ENCODE measurements at regions of chr3 and their contacts with region 1.

Region 1: GRCh38 chr3:129399145-129399894 is 29.1 kb downstream of the EFCAB12 start:
- DNase-seq: peak; percentile 95
- ATAC-seq: peak; percentile 74
- H3K4me3 ChIP-seq: peak overlapping the region; percentile 61 to 86 (median 85)
- H3K27ac ChIP-seq: peak overlapping the region; percentile 87
- H3K4me1 ChIP-seq: peaks cover 75% of the 10 kb centered on the region
- H3K27me3 ChIP-seq: no peaks in the 10 kb centered on the region; a peak in 1 of 5 replicates
- CTCF ChIP-seq: peak; percentile 84
- EP300 ChIP-seq: peak in 1 of 2 experiments; percentile 100; a peak in 1 of 4 replicates
- POLR2A ChIP-seq: no peak
- RAD21 ChIP-seq: peak; percentile 23; the same call in 1 of the 2 replicates

Region 2: GRCh38 chr3:129439817-129440617 is 40.7 kb after region 1 on chr3 and contains the starts of genes IFT122 and MBD4:
- CTCF ChIA-PET with region 1: no interaction called
- POLR2A ChIA-PET with region 1: interaction called, 23 read pairs
- in situ Hi-C with region 1: no loop called
- intact Hi-C with region 1: no loop called
- DNase-seq: peak; percentile 97
- ATAC-seq: peak; percentile 96
- H3K4me3 ChIP-seq: peak within 1 kb of the TSS; percentile 86 to 96 (median 90)
- H3K27ac ChIP-seq: peak within 1 kb of the TSS; percentile 75
- H3K4me1 ChIP-seq: peaks cover 55% of the 10 kb centered on the region
- H3K27me3 ChIP-seq: no peaks in the 10 kb centered on the region; a peak in 1 of 5 replicates
- CTCF ChIP-seq: no peak
- EP300 ChIP-seq: 0 out of 4 replicates have a peak, but pooled peaks of 1 of the 2 experiments have one; percentile 14
- POLR2A ChIP-seq: peak; percentile 64 to 69
- RAD21 ChIP-seq: 0 out of 2 replicates have a peak, but pooled peaks have one; percentile 34
- total RNA-seq, gene IFT122: 10.3 and 10.8 TPM in 2 replicates
- total RNA-seq, gene MBD4: 25.3 and 26.9 TPM in 2 replicates

Region 3: DNA sequence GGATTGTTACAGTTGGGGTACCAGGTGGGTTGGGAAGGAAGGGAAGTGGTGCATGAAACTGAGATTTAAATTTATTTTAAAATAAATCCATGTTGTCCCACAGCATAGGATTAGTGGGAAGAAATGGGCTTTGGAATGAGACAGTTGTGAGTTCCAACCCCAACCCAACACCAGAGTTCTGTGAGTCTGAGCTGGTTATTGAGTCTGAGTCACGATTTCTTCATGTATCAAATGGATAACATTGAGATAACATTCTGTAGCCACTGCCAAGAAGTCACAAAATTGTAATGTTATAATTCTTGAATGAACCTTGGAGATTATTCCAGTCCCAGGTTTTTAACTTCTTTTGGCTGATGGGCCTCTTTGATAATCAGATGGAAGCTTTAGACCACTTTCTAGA is 54.4 kb after region 1 on chr3:
- CTCF ChIA-PET with region 1: no interaction called
- POLR2A ChIA-PET with region 1: no interaction called
- in situ Hi-C with region 1: no loop called
- intact Hi-C with region 1: no loop called
- DNase-seq: no peak
- ATAC-seq: no peak
- H3K4me3 ChIP-seq: no peak overlapping the region
- H3K27ac ChIP-seq: no peak overlapping the region
- H3K4me1 ChIP-seq: no peaks in the 10 kb centered on the region
- H3K27me3 ChIP-seq: no peaks in the 10 kb centered on the region
- CTCF ChIP-seq: no peak
- EP300 ChIP-seq: no peak
- POLR2A ChIP-seq: no peak
- RAD21 ChIP-seq: no peak